Activated CD4-positive, alpha-beta T cell treated with anti-CD3 and anti-CD28 coated beads, Interleukin-2, amount 10 ng/mL, durations not matched to agents 24 days and 14 days (primary cell): ENCODE measurements at regions of chr15 and their contacts with region 1.

Region 1: DNA sequence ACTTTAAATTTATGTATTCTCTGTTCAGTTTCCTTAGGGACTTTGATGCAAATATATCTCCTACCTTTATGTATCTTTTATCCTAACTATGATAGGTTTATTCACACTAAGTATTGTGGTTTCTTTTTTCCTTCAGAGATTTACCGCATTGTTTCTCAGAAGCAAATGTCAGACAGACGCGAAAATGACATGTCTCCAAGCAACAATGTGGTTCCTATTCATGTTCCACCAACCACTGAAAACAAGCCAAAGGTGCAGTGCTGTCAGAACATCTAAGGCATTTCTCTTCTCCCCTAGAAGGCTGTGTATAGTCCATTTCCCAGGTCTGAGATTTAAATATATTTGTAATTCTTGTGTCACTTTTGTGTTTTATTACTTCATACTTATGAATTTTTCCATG is 18.3 kb downstream of the RAB11A start:
- DNase-seq: peak; percentile 91
- H3K4me3 Mint-ChIP-seq: peak overlapping the region; percentile 66
- H3K27ac Mint-ChIP-seq: peak overlapping the region; percentile 90
- H3K4me1 Mint-ChIP-seq: peaks cover 66% of the 10 kb centered on the region
- H3K27me3 Mint-ChIP-seq: no peaks in the 10 kb centered on the region

Region 2: GRCh38 chr15:65916664-65917406 is 29.3 kb after region 1 on chr15:
- intact Hi-C with region 1: loop called (anchors 1 kb)
- DNase-seq: peak; percentile 88
- H3K4me3 Mint-ChIP-seq: peak overlapping the region; percentile 54
- H3K27ac Mint-ChIP-seq: peak overlapping the region; percentile 88
- H3K4me1 Mint-ChIP-seq: peaks cover 40% of the 10 kb centered on the region
- H3K27me3 Mint-ChIP-seq: no peaks in the 10 kb centered on the region